Aorta (tissue), 5 donors: ENCODE measurements at regions of chr17 and their contacts with region 1.

Region 1: GRCh38 chr17:27601069-27601975 is 29.7 kb upstream of the LGALS9 start:
- DNase-seq: peak; percentile 79 to 91
- ATAC-seq: peak; percentile 72
- H3K4me3 ChIP-seq: no peak overlapping the region
- H3K27ac ChIP-seq: no peak overlapping the region
- H3K4me1 ChIP-seq: no peaks in the 10 kb centered on the region
- H3K27me3 ChIP-seq: no peaks in the 10 kb centered on the region

Region 2: DNA sequence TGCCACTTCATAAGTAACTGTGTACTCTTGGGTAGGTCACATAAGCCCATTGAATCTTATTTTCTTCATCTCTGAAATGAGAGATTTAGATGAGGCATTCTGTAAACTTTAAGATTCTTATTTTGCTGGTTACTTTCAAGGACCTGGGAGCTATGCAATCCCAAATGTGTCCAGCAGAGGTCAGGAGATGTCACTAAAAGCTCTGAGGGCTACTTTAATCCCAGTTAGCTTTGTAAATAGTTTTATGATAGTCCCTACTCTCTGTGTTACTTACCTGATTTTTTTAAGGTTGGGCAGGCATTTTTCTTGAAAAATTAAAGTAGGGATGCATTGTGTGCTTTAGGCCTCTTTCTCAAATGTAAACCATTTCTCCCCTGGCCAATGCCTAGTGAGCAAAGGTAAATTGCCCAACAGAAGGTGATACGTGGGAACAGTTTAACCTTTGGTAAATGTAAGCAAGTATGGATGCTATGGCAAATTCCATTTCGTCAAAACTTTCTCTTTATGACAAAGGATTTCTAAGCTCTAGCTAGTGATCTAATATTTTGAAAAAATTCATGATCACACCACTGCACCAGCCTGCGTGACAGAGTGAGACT is 364.5 kb before region 1 on chr17:
- intact Hi-C with region 1: loop called (anchors 2 kb)
- DNase-seq: peak; percentile 81 to 82
- ATAC-seq: peak; percentile 76
- H3K4me3 ChIP-seq: no peak overlapping the region
- H3K27ac ChIP-seq: no peak overlapping the region
- H3K4me1 ChIP-seq: no peaks in the 10 kb centered on the region
- H3K27me3 ChIP-seq: no peaks in the 10 kb centered on the region

Region 3: GRCh38 chr17:27332485-27333409 is 268.6 kb before region 1 on chr17:
- intact Hi-C with region 1: no loop called
- DNase-seq: peak; percentile 100
- ATAC-seq: peak; percentile 99
- H3K4me3 ChIP-seq: peak overlapping the region; percentile 25 to 30
- H3K27ac ChIP-seq: peak overlapping the region in 1 of 2 donors; percentile 92
- H3K4me1 ChIP-seq: no peaks in the 10 kb centered on the region
- H3K27me3 ChIP-seq: no peaks in the 10 kb centered on the region

Region 4: DNA sequence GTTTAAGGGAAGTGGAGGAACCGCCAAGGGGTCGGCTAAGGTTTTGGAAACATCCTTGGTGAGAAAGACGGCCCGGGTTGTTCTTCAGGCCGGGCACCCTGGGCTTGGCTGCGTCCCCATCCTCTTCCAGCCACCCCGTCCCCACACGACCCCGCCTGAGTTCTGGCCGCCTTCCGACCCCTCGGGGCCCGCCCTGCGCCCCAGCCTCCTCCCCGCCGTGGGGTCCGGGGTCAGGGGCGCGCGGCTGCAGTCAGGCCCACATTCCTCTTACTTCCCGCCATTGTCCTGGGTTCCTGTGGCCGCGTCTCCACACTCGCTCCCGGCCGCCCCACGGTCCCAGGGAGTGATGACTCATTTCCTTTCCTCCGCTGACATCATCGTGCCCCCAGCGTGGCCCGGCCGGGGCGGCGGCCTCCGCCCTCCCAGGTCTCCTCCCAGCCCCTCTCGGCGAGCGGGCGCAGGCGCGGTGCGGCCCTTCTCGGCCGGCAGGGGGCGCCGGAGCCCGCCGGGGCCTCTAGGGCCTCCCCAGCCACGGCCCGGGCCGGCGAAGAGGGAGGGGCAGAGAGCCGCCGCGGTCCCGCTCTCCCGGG is 247.8 kb before region 1 on chr17:
- intact Hi-C with region 1: loop called (anchors 2 to 5 kb)
- DNase-seq: peak; percentile 96 to 97
- ATAC-seq: peak; percentile 96
- H3K4me3 ChIP-seq: peak overlapping the region in 1 of 2 donors; percentile 59
- H3K27ac ChIP-seq: peak overlapping the region; percentile 58 to 79
- H3K4me1 ChIP-seq: no peaks in the 10 kb centered on the region
- H3K27me3 ChIP-seq: no peaks in the 10 kb centered on the region

Region 5: GRCh38 chr17:27381007-27381501 is 220.3 kb before region 1 on chr17:
- intact Hi-C with region 1: loop called in 1 of 2 experiments (anchors 10 kb)
- DNase-seq: peak; percentile 83 to 92
- ATAC-seq: peak; percentile 45
- H3K4me3 ChIP-seq: no peak overlapping the region
- H3K27ac ChIP-seq: no peak overlapping the region
- H3K4me1 ChIP-seq: no peaks in the 10 kb centered on the region
- H3K27me3 ChIP-seq: no peaks in the 10 kb centered on the region

Region 6: DNA sequence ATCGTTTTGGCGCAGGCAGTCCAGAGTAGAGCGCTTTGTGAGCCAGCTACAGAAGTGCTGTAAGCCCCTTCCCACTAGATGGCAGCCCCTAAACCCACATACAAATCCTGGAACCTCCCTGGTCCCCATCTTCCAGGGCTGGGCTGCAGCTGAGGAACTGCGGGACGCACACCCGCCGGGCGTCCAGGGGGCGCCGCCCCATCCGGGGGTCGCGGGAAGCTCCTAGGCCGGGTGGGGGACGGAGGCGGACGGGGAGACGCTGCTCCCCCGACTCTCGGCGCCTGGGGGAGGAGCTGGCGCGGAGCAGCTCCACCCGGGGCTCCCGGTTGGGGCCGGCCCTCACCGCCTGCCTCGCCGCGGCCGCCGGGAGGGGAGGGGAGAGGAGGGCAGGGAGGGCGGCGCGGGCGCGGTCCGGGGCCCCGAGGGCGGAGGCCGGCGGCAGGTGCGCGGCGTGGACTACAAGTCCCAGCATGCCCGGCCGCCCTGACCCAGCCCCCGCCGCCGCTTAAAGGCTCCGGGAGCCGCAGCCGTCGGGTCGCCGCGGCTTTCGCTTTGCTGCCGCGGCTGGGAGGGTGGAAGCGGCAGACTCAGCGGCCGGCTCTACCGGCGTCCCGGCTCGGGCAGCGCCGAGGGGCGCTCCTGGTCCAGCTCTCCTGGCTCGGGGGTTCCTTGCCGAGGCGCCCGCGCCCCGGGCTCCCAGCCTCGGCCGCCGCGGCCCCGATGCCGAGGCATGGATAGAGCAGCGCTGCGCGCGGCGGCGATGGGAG is 145.2 kb before region 1 on chr17 and contains the start of gene KSR1:
- intact Hi-C with region 1: loop called in 1 of 2 experiments (anchors 2 kb)
- DNase-seq: peak; percentile 89 to 91
- ATAC-seq: peak; percentile 89
- H3K4me3 ChIP-seq: peak within 1 kb of the TSS; percentile 87 to 93
- H3K27ac ChIP-seq: peak within 1 kb of the TSS; percentile 31 to 34
- H3K4me1 ChIP-seq: no peaks in the 10 kb centered on the region
- H3K27me3 ChIP-seq: no peaks in the 10 kb centered on the region
- total RNA-seq, gene KSR1: 38.4 to 75.7 TPM

Region 7: GRCh38 chr17:27494192-27495091 is 106.9 kb before region 1 on chr17:
- intact Hi-C with region 1: loop called (anchors 1 to 2 kb)
- DNase-seq: peak; percentile 89 to 92
- ATAC-seq: peak; percentile 86
- H3K4me3 ChIP-seq: no peak overlapping the region
- H3K27ac ChIP-seq: peak overlapping the region in 1 of 2 donors; percentile 75
- H3K4me1 ChIP-seq: no peaks in the 10 kb centered on the region
- H3K27me3 ChIP-seq: no peaks in the 10 kb centered on the region

Region 8: DNA sequence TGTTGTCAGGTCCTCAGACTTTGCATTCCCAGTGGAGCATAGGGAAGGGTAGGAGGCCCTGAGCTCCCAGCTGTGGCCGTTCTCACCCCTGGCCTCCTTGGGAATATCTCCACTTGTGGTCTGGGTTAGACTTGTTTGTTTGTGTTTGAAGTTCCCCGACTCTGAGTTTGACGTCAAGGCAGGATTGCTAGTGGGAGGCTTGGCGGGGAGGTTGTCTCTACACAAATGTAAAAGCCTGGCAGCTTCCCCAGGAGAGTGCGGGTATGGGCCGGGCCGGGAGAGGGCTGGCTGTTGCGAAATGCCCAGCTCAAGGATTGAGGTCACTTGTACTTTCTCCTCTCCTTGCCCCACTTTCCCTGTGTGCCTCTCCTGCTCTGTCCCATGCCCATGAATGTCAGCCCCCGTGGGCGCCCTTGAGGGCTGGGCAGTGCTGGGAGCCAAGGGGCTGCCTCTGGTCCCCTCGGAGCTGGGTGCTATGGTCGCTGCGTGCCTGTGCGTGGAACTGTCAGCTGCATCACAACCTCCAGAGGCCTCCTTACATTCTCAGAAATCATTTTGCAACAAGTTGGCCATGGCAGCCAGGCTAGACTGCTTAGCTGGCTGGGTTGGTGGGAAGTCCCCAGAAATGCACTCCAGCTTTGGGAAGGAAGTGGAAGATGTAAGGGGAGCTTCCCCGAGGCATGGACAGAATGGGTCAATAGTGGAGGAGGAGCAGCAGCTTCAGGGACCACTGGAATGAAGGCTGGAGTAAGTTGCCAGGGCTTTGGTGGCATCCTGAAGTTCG is 60.8 kb before region 1 on chr17:
- intact Hi-C with region 1: no loop called
- DNase-seq: peak; percentile 90 to 94
- ATAC-seq: peak; percentile 88
- H3K4me3 ChIP-seq: no peak overlapping the region
- H3K27ac ChIP-seq: peak overlapping the region in 1 of 2 donors; percentile 53
- H3K4me1 ChIP-seq: no peaks in the 10 kb centered on the region
- H3K27me3 ChIP-seq: no peaks in the 10 kb centered on the region

Region 9: DNA sequence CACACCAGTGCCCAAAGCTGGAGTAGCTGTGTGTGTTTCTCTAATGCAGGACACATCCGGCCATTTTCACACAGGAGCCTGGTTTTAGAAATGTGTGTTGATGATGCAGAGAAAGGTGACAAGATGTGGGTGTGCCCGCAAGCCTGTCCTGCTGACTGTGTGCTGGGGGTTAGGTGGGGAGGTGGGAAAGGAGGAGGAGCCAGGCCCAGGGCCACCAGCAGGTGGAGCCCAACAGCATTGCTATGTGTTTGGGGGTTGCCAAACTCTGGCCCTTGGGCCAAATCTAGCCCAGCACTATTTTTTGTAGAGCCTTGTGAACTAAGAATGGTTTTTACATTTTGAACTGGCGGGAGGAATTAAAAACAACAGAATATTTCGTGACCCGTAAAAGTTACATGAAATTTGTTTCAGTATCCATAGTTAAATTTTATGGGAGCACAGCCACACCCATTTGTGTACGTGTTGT is 32.0 kb before region 1 on chr17:
- intact Hi-C with region 1: no loop called
- DNase-seq: no peak
- ATAC-seq: no peak
- H3K4me3 ChIP-seq: no peak overlapping the region
- H3K27ac ChIP-seq: no peak overlapping the region
- H3K4me1 ChIP-seq: no peaks in the 10 kb centered on the region
- H3K27me3 ChIP-seq: no peaks in the 10 kb centered on the region

Region 10: GRCh38 chr17:27654654-27655524 is 53.6 kb after region 1 on chr17:
- intact Hi-C with region 1: loop called in 1 of 2 experiments (anchors 2 kb)
- DNase-seq: peak; percentile 74 to 91
- ATAC-seq: peak; percentile 58
- H3K4me3 ChIP-seq: no peak overlapping the region
- H3K27ac ChIP-seq: no peak overlapping the region
- H3K4me1 ChIP-seq: no peaks in the 10 kb centered on the region
- H3K27me3 ChIP-seq: no peaks in the 10 kb centered on the region